BJ (cell line): ENCODE measurements at regions of chr16 and their contacts with region 1.

Region 1: DNA sequence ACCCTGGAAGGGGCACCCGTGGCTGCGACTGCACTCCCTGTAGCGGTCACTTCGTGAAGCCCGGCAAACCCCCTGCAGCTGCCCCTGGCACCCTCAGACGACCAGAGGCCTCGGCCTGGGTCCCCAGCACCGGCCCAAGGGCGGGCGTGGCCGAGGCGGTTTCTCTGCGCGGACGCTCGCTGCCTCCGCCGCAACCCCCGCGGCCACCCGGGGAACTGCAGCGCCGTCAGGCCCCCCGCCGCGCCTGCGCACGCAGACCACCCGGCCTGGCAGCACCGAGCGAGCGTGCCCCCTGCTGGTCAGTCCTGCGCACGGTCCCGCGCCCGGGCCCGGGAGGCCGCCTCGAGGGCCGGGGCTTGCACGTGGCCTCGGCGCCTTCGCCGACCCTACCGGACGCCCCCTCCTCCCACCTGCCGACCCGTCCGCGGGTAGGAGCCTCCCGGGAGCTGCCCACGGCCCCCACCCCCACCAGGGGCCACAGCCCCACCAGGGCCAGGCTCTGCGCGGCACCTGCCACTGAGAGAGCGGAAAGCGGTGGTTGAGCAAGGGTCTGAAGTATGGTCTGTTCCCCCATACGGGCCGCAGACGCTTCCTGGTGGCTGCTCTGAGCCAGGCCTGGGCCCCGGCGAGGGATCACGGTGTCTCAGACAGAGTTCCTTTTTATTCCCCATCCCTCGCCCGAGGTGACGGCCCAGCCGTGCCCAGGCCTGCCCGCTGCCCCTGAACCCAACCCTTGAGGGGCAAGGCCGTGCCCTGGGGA is 11.5 kb upstream of the HS3ST6 start:
- DNase-seq: no peak
- H3K4me3 ChIP-seq: peak overlapping the region; percentile 54
- H3K27me3 ChIP-seq: no peaks in the 10 kb centered on the region
- CTCF ChIP-seq: peak; percentile 34

Region 2: DNA sequence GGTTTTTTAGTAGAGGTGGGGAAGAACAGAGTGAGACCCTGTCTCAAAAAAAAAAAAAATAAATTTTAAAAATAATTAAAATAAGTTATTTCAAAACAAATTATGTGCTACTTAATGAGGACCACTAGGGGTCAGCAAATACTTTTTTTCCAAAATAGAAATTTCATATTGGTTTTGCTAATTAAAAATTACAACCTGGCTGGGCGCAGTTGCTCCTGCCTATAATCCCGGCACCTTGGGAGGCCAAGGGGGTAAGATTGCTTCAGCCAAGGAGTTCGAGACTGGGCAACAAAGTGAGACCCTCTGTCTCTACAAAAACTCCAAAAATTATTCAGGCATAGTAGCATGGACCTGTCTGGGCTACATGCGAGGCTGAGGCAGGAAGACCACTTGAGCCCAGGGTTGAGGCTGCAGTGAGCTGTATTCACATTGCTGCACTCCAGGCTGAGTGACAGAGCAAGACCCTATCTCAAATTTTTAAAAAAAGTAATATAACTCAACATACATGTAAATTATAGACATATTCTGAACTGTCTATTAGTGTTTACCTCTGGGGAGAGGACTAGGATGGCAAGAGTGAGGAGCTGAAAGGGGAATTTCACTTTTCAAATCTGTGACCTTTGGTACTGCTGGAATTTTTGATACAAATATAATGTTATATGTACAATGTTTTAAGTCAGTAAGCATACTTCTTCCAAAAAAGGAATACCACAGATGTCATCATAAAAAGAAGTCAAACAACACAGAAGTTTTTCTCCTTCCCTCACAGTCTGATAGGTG is 65.9 kb before region 1 on chr16:
- CTCF ChIA-PET with region 1: interaction called, 48 read pairs
- POLR2A ChIA-PET with region 1: no interaction called
- DNase-seq: no peak
- H3K4me3 ChIP-seq: no peak overlapping the region
- H3K27me3 ChIP-seq: peaks cover 5% of the 10 kb centered on the region
- CTCF ChIP-seq: peak; percentile 55

Region 3: GRCh38 chr16:1871974-1872635 is 57.7 kb before region 1 on chr16 and contains the start of gene MEIOB:
- CTCF ChIA-PET with region 1: interaction called, 17 read pairs
- POLR2A ChIA-PET with region 1: no interaction called
- DNase-seq: no peak
- H3K4me3 ChIP-seq: peak within 1 kb of the TSS; percentile 18
- H3K27me3 ChIP-seq: peaks cover 2% of the 10 kb centered on the region; the same call in 1 of the 2 replicates
- CTCF ChIP-seq: no peak
- polyA plus RNA-seq, gene MEIOB: 0.25 and 0.28 TPM in 2 replicates

Region 4: GRCh38 chr16:1942810-1943726 is 13.3 kb after region 1 on chr16 and contains the start of gene MSRB1:
- CTCF ChIA-PET with region 1: interaction called, 21 read pairs
- POLR2A ChIA-PET with region 1: no interaction called
- DNase-seq: peak; percentile 85
- H3K4me3 ChIP-seq: peak within 1 kb of the TSS; percentile 81
- H3K27me3 ChIP-seq: no peaks in the 10 kb centered on the region
- CTCF ChIP-seq: no peak
- polyA plus RNA-seq, gene MSRB1: 44.4 and 61.9 TPM in 2 replicates

Region 5: GRCh38 chr16:2009789-2010510 is 80.2 kb after region 1 on chr16 and contains the start of gene ZNF598:
- CTCF ChIA-PET with region 1: no interaction called
- POLR2A ChIA-PET with region 1: no interaction called
- DNase-seq: no peak
- H3K4me3 ChIP-seq: peak within 1 kb of the TSS; percentile 77
- H3K27me3 ChIP-seq: no peaks in the 10 kb centered on the region
- CTCF ChIP-seq: no peak
- polyA plus RNA-seq, gene ZNF598: 14.4 and 23.0 TPM in 2 replicates

Region 6: GRCh38 chr16:2071454-2072202 is 141.9 kb after region 1 on chr16:
- CTCF ChIA-PET with region 1: no interaction called
- POLR2A ChIA-PET with region 1: no interaction called
- DNase-seq: no peak
- H3K4me3 ChIP-seq: no peak overlapping the region
- H3K27me3 ChIP-seq: no peaks in the 10 kb centered on the region
- CTCF ChIP-seq: no peak